Breast epithelium (tissue), 4 donors: ENCODE measurements at regions of chrX and their contacts with region 1.

Region 1: DNA sequence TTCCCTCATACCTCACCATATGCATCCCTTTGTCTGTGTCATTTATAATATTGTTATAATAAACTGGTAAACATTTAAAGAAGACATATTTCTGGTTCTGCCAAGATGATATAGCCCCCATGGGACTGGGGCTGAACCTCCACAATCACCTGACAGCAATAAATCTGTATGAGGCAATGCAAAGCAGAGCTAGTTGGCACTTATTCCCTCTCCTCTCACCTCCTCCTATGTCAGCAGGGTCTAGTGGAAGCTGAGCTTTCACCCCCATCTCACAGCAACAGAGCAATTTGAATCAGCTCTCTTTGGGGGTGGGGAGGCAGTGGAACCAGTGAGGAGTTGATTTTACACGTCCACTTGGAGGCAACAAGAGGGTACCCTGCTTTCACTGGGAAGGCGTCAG is 206.9 kb downstream of the AR start:
- DNase-seq: no peak
- H3K4me3 ChIP-seq: no peak overlapping the region
- H3K27ac ChIP-seq: no peak overlapping the region
- H3K4me1 ChIP-seq: no peaks in the 10 kb centered on the region
- H3K27me3 ChIP-seq: peaks cover 0 to 15% of the 10 kb centered on the region in 2 donors
- CTCF ChIP-seq: no peak
- POLR2A ChIP-seq: no peak

Region 2: DNA sequence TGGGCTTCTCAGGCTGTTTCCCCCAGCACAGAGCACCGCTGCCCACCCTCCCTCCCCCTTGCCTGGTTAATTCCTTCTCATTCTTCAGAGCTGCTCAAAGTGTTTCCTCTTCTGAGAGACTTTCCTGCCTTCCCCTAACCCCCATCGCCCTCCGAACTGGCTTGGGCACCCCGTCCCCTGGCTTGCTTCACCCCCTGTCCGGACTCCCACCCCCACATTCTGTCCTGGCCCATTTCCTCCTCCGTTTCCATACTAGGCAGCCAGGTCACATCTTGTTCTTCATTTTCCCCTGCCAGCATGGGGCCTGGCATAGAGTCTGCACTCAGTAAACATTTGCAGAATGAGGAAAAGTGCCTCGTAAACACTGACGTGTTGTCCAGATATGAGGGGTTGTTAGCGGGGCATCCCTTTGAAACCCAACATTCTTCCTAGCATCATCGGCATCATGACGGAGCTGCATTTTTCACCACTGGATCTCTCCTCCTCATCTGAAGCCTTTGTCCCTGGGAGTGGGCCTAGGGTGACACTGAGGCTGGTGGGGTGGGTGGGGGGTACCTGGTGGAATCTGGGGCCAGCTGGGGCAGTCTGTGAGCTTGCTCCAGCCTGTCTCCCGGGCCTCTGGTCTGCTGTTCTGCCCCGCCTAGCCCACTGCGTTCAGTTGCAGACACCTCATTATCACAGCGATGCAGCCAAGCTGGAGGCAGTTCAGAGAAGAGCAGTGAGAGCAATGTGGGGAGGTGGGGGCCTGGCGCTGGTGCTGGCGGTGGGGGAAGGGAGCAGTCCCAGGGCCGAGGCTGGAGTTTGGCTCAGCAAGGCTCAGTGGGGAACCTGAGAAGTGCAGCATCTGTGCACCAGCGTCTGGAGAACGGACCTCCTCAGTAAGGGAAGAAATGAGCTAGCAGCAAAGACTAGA is 1564.0 kb after region 1 on chrX:
- intact Hi-C with region 1: loop called (anchors 10 kb)
- DNase-seq: no peak
- H3K4me3 ChIP-seq: no peak overlapping the region
- H3K27ac ChIP-seq: no peak overlapping the region
- H3K4me1 ChIP-seq: no peaks in the 10 kb centered on the region
- H3K27me3 ChIP-seq: peaks cover 0 to 78% of the 10 kb centered on the region in 2 donors
- CTCF ChIP-seq: no peak
- POLR2A ChIP-seq: no peak